GM12878 (cell line): ENCODE measurements at regions of chr5 and their contacts with region 1.

Region 1: DNA sequence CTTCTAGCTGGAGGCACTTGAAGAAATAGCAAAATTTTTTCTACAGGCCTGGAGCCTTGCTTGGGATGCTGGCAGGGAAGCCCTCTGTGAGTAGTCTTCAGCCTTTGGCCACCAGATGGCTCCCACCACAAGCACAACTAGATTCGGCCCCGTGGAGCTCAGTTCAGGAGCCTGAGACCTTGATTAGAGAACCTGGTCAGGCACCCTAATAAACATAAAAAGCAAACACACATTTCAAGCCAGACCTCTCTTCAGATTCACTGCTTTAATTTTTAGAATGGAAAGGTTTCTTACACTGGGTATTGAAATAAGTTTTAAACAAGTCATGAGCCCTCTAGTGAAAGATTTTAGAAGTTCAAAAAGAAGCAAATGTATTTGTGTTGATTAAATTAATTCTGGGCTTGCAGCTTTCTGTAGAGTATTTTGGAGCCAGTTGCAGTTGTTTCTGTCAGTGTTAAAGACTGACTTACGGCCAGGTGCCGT is 41.4 kb downstream of the GLRX start:
- DNase-seq: peak; percentile 51
- ATAC-seq: peak; percentile 100
- H3K4me3 ChIP-seq: no peak overlapping the region
- H3K27ac ChIP-seq: no peak overlapping the region
- H3K4me1 ChIP-seq: no peaks in the 10 kb centered on the region
- H3K27me3 ChIP-seq: no peaks in the 10 kb centered on the region
- CTCF ChIP-seq: peak; percentile 84 to 86 (median 86)
- EP300 ChIP-seq: no peak
- POLR2A ChIP-seq: no peak
- RAD21 ChIP-seq: peak; percentile 95

Region 2: GRCh38 chr5:95646554-95647431 is 134.3 kb before region 1 on chr5 and contains the start of gene RFESD:
- CTCF ChIA-PET with region 1: interaction called, 93 read pairs
- POLR2A ChIA-PET with region 1: no interaction called
- RAD21 ChIA-PET with region 1: interaction called, 59 read pairs
- SMC1A ChIA-PET with region 1: interaction called, 61 read pairs
- in situ Hi-C with region 1: no loop called
- intact Hi-C with region 1: loop called (anchors 1 kb)
- DNase-seq: peak; percentile 83
- ATAC-seq: peak; percentile 97
- H3K4me3 ChIP-seq: peak within 1 kb of the TSS; percentile 75
- H3K27ac ChIP-seq: peak within 1 kb of the TSS; percentile 80
- H3K4me1 ChIP-seq: peaks cover 5% of the 10 kb centered on the region
- H3K27me3 ChIP-seq: no peaks in the 10 kb centered on the region
- CTCF ChIP-seq: peak in 2 of 3 experiments; percentile 2 to 9; a peak in 1 of 6 replicates
- EP300 ChIP-seq: no peak
- POLR2A ChIP-seq: peak; percentile 88
- RAD21 ChIP-seq: 0 out of 2 replicates have a peak, but pooled peaks have one; percentile 1
- polyA plus RNA-seq, gene RFESD: 14.0 to 14.7 TPM

Region 3: GRCh38 chr5:95669540-95669939 is 111.6 kb before region 1 on chr5:
- CTCF ChIA-PET with region 1: interaction called, 177 read pairs
- POLR2A ChIA-PET with region 1: no interaction called
- RAD21 ChIA-PET with region 1: interaction called, 32 read pairs
- SMC1A ChIA-PET with region 1: interaction called, 49 read pairs
- in situ Hi-C with region 1: no loop called
- intact Hi-C with region 1: loop called (anchors 2 kb)
- DNase-seq: no peak
- ATAC-seq: no peak
- H3K4me3 ChIP-seq: no peak overlapping the region
- H3K27ac ChIP-seq: no peak overlapping the region
- H3K4me1 ChIP-seq: no peaks in the 10 kb centered on the region
- H3K27me3 ChIP-seq: no peaks in the 10 kb centered on the region
- CTCF ChIP-seq: no peak
- EP300 ChIP-seq: no peak
- POLR2A ChIP-seq: no peak
- RAD21 ChIP-seq: no peak

Region 4: GRCh38 chr5:95794070-95794516 is 13.0 kb after region 1 on chr5:
- CTCF ChIA-PET with region 1: interaction called, 42 read pairs
- POLR2A ChIA-PET with region 1: no interaction called
- RAD21 ChIA-PET with region 1: interaction called, 10 read pairs
- SMC1A ChIA-PET with region 1: interaction called, 18 read pairs
- in situ Hi-C with region 1: no loop called
- intact Hi-C with region 1: no loop called
- DNase-seq: no peak
- ATAC-seq: no peak
- H3K4me3 ChIP-seq: no peak overlapping the region
- H3K27ac ChIP-seq: no peak overlapping the region
- H3K4me1 ChIP-seq: no peaks in the 10 kb centered on the region
- H3K27me3 ChIP-seq: no peaks in the 10 kb centered on the region
- CTCF ChIP-seq: no peak
- EP300 ChIP-seq: no peak
- POLR2A ChIP-seq: no peak
- RAD21 ChIP-seq: no peak

Region 5: DNA sequence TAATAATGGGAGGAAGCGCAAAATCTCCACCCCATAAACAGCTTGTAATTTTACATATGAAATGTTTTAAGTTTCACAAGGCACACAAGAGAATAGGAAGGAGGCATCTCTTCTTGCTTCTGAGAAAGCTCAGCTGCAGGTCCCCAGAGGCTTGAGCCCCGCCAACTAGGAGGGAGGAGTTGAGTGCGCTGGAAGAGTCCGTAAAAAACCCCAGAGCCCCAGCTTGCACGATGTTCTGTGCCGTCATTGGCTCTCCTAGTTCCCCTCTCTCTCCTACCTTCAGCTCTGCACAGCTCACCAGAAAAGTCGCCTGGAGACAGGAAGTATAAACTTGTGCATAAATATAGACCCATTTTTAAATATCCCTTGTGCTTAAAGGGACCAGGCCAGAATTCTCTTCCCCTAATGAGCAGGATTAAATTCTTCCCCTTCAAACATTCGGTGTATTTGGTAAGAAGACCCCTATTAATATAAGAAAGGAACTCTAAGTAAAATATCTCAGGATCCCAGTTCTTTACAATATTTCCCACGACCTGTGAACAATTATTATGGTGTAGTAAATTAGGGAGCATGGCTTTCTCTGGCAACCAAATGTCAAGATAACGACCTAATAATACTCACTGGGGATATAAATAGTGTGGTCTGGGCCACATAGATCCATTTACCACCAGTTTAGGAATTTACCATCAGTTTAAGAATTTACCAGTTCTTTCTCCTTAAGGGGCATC is 27.7 kb after region 1 on chr5:
- CTCF ChIA-PET with region 1: interaction called, 56 read pairs
- POLR2A ChIA-PET with region 1: interaction called, 5 read pairs
- RAD21 ChIA-PET with region 1: interaction called, 38 read pairs
- SMC1A ChIA-PET with region 1: interaction called, 40 read pairs
- in situ Hi-C with region 1: no loop called
- intact Hi-C with region 1: no loop called
- DNase-seq: peak; percentile 98
- ATAC-seq: peak; percentile 100
- H3K4me3 ChIP-seq: peak overlapping the region; percentile 36; the same call in 1 of the 2 replicates
- H3K27ac ChIP-seq: peak overlapping the region; percentile 97
- H3K4me1 ChIP-seq: peaks cover 29% of the 10 kb centered on the region
- H3K27me3 ChIP-seq: no peaks in the 10 kb centered on the region
- CTCF ChIP-seq: no peak
- EP300 ChIP-seq: peak; percentile 12 to 13; a peak in 1 of 4 replicates
- POLR2A ChIP-seq: no peak
- RAD21 ChIP-seq: no peak

Region 6: DNA sequence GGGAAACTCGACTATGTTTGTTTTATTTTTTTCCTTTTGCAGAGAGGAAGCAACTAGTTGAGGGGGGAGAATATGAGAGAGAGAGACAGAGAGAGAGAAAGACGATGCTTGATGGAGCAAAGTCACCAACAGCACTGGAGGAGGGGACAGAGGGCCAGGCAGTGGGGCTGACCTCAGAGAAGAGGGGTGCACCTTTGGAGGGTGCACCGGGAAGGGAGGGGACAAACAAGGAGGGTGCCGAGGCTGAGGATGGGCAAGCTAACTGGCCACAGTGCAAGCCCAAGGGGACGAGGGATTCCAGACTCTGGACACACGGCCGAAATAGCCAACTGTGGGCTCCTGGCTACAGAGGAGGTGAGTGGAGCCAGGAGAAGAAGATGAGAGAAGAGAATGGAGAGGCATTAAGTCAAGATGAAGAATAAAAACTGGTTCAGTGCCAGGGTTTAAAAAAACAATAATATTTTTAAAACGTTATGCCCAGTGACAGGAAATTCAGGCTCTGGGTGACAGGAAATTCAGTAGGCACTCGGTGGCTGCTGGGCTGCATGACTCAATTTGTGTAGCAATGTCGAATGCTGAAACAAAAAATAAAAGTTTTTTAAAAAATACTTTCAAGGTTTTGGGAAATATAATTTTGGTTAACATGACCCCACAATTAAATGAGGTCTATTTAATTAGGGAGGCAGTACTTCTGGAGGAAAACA is 54.7 kb after region 1 on chr5:
- CTCF ChIA-PET with region 1: interaction called, 653 read pairs
- POLR2A ChIA-PET with region 1: interaction called, 3 read pairs
- RAD21 ChIA-PET with region 1: interaction called, 209 read pairs
- SMC1A ChIA-PET with region 1: interaction called, 622 read pairs
- in situ Hi-C with region 1: no loop called
- intact Hi-C with region 1: no loop called
- DNase-seq: no peak
- ATAC-seq: peak; percentile 45
- H3K4me3 ChIP-seq: peak overlapping the region; percentile 72
- H3K27ac ChIP-seq: peak overlapping the region; percentile 86
- H3K4me1 ChIP-seq: peaks cover 22% of the 10 kb centered on the region
- H3K27me3 ChIP-seq: no peaks in the 10 kb centered on the region
- CTCF ChIP-seq: no peak
- EP300 ChIP-seq: no peak
- POLR2A ChIP-seq: no peak
- RAD21 ChIP-seq: no peak